Panc1 (cell line): ENCODE measurements at regions of chr7 and their contacts with region 1.

Region 1: DNA sequence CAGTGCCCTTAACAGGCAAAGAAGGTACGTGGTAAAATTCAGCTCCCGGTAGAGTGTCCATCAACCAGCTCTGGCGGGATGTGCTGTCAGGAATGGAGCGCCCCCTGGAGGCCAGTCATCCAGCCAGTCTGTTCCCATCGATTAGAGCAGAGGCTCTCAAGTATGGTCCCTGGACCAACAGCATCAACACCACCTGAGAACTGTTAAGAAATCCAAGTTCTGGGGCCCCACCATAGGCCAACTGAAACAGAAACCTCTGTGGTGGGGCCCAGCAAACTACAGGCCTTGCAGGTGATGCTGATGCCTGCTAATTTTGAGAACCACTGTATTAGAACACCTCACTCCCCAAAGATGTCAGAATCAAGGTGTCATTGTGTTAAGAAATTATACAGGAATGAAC is 109.2 kb downstream of the DPY19L1 start:
- DNase-seq: peak; percentile 10
- ATAC-seq: peak; percentile 93
- H3K4me3 ChIP-seq: no peak overlapping the region
- H3K27ac ChIP-seq: no peak overlapping the region
- H3K4me1 ChIP-seq: no peaks in the 10 kb centered on the region
- H3K27me3 ChIP-seq: no peaks in the 10 kb centered on the region
- CTCF ChIP-seq: peak; percentile 92

Region 2: DNA sequence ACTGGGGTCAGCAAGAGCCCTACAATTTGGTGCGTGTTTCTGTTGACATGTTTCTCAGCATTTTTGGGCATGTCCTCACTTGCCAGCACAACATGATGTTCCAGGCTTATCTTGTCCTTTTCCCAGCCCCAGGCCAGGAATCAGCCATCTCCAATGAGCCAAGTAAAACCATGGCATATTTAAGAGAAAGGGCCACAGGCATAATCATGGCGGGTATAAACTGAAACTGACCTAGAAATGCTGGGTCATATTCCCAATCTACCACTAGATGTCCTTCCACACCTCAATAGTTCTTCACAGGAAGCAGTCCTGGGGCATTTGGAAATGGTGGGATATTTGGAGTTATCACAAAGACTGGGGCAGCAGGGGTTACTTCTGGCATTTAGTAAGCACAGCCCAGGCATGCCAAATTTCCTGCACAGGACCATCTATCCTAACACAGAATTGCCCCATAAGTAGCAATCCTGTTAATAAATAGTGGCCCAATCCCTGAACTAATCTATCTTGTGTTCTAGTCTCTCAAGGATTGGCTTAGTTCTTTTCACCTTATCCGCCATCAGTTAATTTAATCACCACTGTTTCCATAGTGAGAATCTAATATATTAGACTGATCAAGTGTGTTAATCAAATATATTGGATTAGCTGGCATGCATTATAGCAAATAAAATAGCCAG is 168.5 kb before region 1 on chr7:
- CTCF ChIA-PET with region 1: no interaction called
- POLR2A ChIA-PET with region 1: no interaction called
- in situ Hi-C with region 1: no loop called
- intact Hi-C with region 1: loop called (anchors 10 kb)
- DNase-seq: peak; percentile 53
- ATAC-seq: peak; percentile 91
- H3K4me3 ChIP-seq: no peak overlapping the region
- H3K27ac ChIP-seq: peak overlapping the region; percentile 54; the same call in 1 of the 2 replicates
- H3K4me1 ChIP-seq: no peaks in the 10 kb centered on the region
- H3K27me3 ChIP-seq: no peaks in the 10 kb centered on the region
- CTCF ChIP-seq: peak; percentile 84